ENCODE measurements at regions of chr6 and their contacts with region 1.

Region 1: DNA sequence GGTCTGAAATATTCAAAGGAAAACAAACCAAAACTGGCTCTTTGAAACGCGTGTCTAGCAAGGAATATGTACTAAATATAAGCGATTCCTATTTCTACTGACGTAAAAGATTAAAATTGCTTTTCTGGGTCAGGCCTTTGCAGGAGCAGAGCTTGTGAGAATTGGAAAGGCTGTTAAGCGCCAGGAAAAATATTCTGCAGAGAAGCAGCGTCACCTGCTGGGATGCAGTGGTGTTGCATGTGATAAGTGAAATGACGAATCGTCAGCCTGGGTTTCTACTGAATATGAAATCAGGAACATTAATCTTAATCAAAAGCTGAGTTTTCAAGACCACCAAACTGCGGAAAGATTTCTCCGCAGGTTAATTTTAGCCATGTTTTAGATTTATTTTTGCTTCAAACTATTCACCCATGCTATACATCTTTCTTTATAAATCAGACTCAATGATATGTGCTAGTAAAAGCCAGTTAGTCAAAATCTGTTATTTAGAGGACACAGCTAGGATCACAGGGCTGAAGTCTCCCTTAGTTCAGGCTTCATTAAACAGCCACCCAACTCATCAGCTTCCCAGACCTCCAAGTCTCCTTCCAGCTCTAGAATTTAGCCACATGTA is 67.4 kb downstream of the ALDH8A1 start:
- H3K4me3 ChIP-seq: no peak overlapping the region
- H3K27ac ChIP-seq: no peak overlapping the region
- H3K4me1 ChIP-seq: no peaks in the 10 kb centered on the region
- CTCF ChIP-seq: peak; percentile 72

Region 2: GRCh38 chr6:134111062-134111677 is 771.4 kb before region 1 on chr6:
- CTCF ChIA-PET with region 1: interaction called, 16 read pairs
- POLR2A ChIA-PET with region 1: no interaction called
- H3K4me3 ChIP-seq: no peak overlapping the region
- H3K27ac ChIP-seq: no peak overlapping the region
- H3K4me1 ChIP-seq: peaks cover 7% of the 10 kb centered on the region
- CTCF ChIP-seq: peak; percentile 77

Region 3: DNA sequence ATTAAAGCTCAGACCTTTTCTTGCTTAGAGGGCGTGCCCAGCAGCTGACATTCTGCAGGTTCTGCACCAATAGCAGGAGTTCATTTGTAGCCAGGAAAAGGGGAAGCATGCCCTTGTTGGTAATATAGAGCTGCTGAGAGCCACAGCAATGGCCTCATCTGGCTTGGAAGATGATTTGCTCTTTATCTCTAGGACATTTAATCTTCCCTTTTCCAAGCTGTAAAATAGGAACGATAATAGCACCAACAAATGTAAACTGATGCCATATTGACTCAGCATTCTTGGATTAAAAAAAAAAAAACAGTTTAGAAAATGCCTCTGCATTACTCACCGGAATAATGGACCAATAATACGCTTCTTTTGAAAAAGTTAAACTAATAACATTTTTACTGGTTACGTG is 736.7 kb before region 1 on chr6:
- CTCF ChIA-PET with region 1: interaction called, 15 read pairs
- POLR2A ChIA-PET with region 1: interaction called, 4 read pairs
- H3K4me3 ChIP-seq: no peak overlapping the region
- H3K27ac ChIP-seq: no peak overlapping the region
- H3K4me1 ChIP-seq: no peaks in the 10 kb centered on the region
- CTCF ChIP-seq: no peak

Region 4: DNA sequence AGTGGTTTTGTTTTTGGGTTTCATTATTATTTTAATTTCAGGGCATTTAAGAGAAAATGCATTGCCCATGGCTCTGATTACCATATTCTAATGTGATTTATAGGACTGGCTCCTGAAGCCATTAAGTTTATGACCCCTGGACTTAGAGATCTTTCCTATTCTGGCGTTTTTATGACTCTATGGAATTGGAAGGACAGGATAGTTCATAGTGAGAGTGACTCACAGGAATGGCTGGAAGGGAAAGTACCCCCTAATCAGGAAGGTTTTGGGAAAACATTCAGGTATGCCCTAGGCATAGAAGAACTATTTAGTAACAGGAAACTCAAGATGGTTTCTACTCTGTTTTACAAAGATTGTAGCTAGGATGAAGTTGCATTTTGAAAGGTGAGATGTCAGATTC is 721.5 kb before region 1 on chr6:
- CTCF ChIA-PET with region 1: interaction called, 43 read pairs
- POLR2A ChIA-PET with region 1: no interaction called
- H3K4me3 ChIP-seq: no peak overlapping the region
- H3K27ac ChIP-seq: no peak overlapping the region
- H3K4me1 ChIP-seq: no peaks in the 10 kb centered on the region
- CTCF ChIP-seq: no peak

Region 5: DNA sequence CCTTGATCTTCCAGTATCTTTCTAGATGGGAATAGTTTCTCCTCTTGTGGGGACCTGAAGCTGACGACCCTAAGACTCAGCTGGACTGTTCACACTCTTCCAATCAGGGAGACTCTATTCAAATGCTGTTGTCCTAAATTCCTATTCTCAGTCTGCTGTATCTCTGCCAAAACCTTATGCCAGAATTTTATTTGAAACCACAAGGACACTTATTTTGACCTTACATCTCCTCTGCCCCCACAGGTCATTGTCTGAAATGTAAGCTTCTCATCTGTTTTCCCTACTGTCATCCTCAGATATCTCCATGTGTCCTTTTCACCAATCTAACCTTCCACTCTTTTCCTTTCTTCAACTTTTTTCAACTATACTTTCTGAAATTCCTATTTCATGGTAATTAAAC is 275.1 kb before region 1 on chr6:
- CTCF ChIA-PET with region 1: no interaction called
- POLR2A ChIA-PET with region 1: no interaction called
- H3K4me3 ChIP-seq: no peak overlapping the region
- H3K27ac ChIP-seq: no peak overlapping the region
- H3K4me1 ChIP-seq: 0 out of 2 replicates have a peak, but pooled peaks cover 2% of the 10 kb centered on the region
- CTCF ChIP-seq: no peak

Region 6: GRCh38 chr6:134714679-134715421 is 167.7 kb before region 1 on chr6:
- CTCF ChIA-PET with region 1: no interaction called
- POLR2A ChIA-PET with region 1: no interaction called
- H3K4me3 ChIP-seq: no peak overlapping the region
- H3K27ac ChIP-seq: no peak overlapping the region
- H3K4me1 ChIP-seq: no peaks in the 10 kb centered on the region
- CTCF ChIP-seq: no peak

Region 7: DNA sequence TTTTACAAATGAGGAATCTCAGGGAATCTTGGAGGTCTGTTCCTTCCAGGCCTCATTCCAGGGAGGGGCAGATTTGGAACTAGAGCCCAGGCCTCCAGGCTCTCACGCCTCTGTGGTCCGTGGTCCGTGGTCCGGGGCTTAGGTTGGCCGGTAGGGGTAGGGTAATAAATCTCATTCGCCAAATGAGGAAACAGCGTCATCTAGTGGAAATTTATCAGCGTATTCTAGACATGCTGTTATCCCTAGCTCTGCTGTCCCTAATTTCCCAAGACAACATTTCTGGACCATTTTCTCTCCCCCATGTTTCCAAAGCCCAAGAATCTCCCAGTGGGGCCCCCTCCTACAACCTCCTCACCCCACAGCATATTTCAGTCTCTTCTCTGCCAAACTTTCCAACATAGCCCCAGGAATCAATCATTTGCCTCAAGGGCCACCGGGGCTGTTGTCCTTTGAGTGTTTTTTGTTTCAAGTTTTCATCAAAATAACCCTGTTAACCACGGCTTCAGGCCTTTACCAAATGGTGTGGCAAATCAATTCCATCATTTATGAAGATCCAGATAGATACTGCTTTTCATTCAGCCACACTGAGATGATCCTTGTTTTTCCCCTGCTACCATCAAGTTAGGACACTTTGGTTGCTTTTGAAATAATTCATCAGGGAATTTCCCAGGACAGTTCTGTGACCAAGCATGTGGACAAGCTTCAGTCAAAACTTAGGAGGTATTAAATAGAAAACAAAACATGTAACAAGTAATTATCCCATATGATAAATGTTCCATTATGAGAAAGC is 59.4 kb before region 1 on chr6:
- CTCF ChIA-PET with region 1: interaction called, 55 read pairs
- POLR2A ChIA-PET with region 1: no interaction called
- H3K4me3 ChIP-seq: no peak overlapping the region
- H3K27ac ChIP-seq: no peak overlapping the region
- H3K4me1 ChIP-seq: no peaks in the 10 kb centered on the region; the same call in 1 of the 2 replicates
- CTCF ChIP-seq: peak; percentile 95

Region 8: DNA sequence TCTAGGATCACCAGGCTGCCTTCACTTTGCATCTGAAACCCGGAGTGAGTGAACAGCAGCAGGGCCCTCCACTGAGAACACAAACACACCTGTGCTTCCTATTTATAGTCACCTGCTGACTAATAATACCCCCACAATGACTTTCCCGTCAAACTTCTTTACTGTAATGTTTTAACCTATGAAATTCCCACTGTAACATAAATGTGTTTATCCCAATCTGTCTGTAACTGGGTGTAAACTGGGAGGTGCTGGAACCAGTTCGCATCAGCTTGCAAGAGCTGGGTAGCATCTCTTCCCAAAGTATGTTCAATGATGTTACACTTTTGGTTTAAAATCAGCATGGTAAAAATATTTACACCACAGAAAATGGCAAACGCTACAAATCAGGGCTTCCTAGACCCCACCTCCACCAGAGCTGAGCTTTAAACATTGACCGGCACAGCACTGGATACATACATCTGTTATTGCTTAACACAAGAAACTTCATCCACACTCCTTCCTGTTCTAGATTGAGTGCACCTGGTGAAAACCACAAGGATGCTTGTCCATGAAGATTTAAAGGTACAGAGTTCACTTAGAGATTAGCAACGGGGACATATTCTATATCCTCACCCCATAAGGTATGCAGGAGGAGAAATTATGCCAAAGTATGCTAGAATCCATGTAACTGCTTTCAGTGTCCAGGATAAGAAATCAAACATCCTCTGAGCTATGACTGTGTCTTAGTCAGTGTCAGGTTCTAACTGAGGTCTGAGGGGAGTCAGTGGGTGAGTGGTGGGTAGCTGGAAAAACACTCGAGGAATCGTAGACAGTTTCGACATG is 11.6 kb before region 1 on chr6:
- CTCF ChIA-PET with region 1: interaction called, 12 read pairs
- POLR2A ChIA-PET with region 1: interaction called, 3 read pairs
- H3K4me3 ChIP-seq: no peak overlapping the region
- H3K27ac ChIP-seq: no peak overlapping the region
- H3K4me1 ChIP-seq: no peaks in the 10 kb centered on the region
- CTCF ChIP-seq: no peak

Region 9: DNA sequence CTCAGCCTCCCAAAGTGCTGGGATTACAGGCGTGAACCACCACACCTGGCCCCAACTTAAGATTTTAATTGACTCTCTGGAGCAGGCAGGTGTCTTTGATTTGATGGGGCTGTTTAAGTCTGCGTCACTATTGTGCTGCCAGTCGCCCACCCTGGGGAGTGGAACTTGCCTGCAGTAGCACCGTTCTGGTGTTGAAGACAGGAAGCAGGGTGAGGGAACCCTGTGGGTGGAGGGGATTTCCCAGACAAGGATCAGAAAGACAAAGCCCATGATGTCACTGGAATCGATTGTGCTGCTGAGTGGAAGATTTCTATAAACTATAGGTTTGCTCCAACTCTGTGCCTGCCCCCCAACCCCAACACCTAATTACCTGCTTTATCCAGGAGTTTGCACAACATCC is 56.4 kb after region 1 on chr6:
- CTCF ChIA-PET with region 1: interaction called, 48 read pairs
- POLR2A ChIA-PET with region 1: no interaction called
- H3K4me3 ChIP-seq: no peak overlapping the region
- H3K27ac ChIP-seq: no peak overlapping the region
- H3K4me1 ChIP-seq: peaks cover 4% of the 10 kb centered on the region; the same call in 1 of the 2 replicates
- CTCF ChIP-seq: no peak

Region 10: GRCh38 chr6:134994431-134994830 is 111.9 kb after region 1 on chr6:
- CTCF ChIA-PET with region 1: no interaction called
- POLR2A ChIA-PET with region 1: no interaction called
- H3K4me3 ChIP-seq: no peak overlapping the region
- H3K27ac ChIP-seq: no peak overlapping the region
- H3K4me1 ChIP-seq: no peaks in the 10 kb centered on the region; the same call in 1 of the 2 replicates
- CTCF ChIP-seq: no peak

Measured in HEK293 (cell line).